A673 (cell line): ENCODE measurements at regions of chr10 and their contacts with region 1.

Region 1: DNA sequence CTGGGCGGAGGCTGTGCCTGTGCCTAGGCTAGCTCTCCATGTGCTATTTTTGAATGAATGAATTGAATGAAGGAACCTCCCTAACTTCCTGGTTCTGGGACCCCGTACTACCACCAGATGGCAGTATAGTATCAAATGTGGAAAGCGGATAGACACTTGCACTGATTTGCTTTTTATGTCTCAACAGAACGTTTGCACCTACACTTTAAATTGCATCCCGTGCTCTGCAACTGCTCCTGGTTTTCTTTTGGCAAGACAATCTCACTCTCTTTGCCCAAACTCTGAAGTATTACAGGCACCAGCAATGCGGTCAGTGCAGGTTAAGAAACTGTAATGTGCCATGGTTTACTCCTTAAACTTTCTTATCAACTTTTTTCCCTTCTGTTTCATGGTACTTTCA is 6.5 kb downstream of the FZD8 start:
- DNase-seq: peak; percentile 89
- H3K4me3 ChIP-seq: peak overlapping the region; percentile 11
- H3K27ac ChIP-seq: no peak overlapping the region
- H3K4me1 ChIP-seq: peaks cover 43% of the 10 kb centered on the region
- H3K27me3 ChIP-seq: no peaks in the 10 kb centered on the region
- CTCF ChIP-seq: peak; percentile 93

Region 2: DNA sequence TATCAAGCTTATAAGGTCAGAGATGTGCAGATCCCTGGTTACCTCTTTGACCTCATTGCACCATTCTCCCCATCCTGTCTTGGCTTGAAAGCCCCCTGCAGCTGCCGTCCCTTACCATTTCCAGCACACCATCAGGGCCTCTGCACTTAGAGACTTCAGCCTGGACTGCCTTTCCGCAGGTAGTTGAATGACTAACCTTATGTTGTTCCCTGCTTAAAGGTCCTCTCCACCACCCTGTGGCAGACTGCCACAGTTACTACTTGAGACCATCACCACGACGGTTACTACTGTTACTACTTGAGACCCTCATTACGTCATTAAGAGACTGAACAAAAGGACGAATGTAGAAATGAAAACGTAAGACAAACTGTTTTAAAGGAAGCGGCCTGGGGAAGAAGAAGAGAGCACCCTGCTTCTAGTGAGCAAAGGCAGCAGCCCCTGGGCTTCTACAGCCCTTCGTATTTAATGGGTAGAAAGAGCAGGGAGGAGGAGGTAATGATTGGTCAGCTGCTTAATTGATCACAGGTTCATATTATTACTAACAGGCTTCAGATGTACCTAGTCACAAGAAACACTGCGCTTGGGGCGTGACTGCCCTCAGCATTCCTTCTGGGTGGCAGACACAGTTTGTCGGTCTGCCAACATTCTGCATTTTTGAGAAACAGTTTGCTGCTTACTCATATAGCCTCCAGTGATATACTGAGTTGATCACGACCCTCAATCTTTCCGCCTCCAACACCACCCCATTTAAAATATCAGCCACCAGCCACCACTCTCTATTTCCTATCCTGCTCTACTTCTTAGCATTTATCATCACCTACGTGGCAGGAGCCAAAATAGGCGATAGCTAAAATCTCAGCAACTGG is 746.3 kb before region 1 on chr10:
- CTCF ChIA-PET with region 1: no interaction called
- POLR2A ChIA-PET with region 1: no interaction called
- intact Hi-C with region 1: no loop called
- DNase-seq: no peak
- H3K4me3 ChIP-seq: no peak overlapping the region
- H3K27ac ChIP-seq: no peak overlapping the region
- H3K4me1 ChIP-seq: no peaks in the 10 kb centered on the region
- H3K27me3 ChIP-seq: no peaks in the 10 kb centered on the region
- CTCF ChIP-seq: no peak

Region 3: GRCh38 chr10:35236739-35237138 is 398.8 kb before region 1 on chr10:
- CTCF ChIA-PET with region 1: interaction called, 12 read pairs
- POLR2A ChIA-PET with region 1: no interaction called
- intact Hi-C with region 1: no loop called
- DNase-seq: peak; percentile 66
- H3K4me3 ChIP-seq: no peak overlapping the region
- H3K27ac ChIP-seq: peak overlapping the region; percentile 40
- H3K4me1 ChIP-seq: peaks cover 16% of the 10 kb centered on the region
- H3K27me3 ChIP-seq: no peaks in the 10 kb centered on the region
- CTCF ChIP-seq: peak; percentile 65

Region 4: GRCh38 chr10:36324831-36325387 is 689.3 kb after region 1 on chr10:
- CTCF ChIA-PET with region 1: no interaction called
- POLR2A ChIA-PET with region 1: no interaction called
- intact Hi-C with region 1: no loop called
- DNase-seq: peak; percentile 11
- H3K4me3 ChIP-seq: no peak overlapping the region
- H3K27ac ChIP-seq: no peak overlapping the region
- H3K4me1 ChIP-seq: no peaks in the 10 kb centered on the region
- H3K27me3 ChIP-seq: no peaks in the 10 kb centered on the region
- CTCF ChIP-seq: no peak

Region 5: DNA sequence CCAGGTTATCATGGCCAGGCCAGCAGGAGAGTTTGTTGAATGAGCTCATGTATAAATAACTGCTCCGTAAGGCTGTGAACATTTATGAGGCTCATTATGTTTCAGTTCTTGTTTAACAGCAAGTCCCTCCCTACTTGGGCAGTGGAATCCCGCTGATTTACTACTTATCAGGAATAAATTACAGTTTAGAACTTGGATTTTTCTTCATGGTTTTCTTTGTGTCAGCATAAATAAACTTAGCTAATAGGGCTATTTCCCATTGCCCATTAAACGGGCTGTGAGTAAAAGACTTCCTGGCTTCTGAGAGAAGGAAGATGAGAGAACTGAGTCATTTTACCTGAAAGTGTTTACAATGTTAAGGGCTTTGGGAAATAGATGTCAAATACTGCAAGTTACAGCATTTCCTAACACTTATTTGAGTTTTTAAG is 788.3 kb after region 1 on chr10:
- CTCF ChIA-PET with region 1: no interaction called
- POLR2A ChIA-PET with region 1: no interaction called
- intact Hi-C with region 1: loop called (anchors 10 kb)
- DNase-seq: peak; percentile 97
- H3K4me3 ChIP-seq: no peak overlapping the region
- H3K27ac ChIP-seq: no peak overlapping the region
- H3K4me1 ChIP-seq: peaks cover 26% of the 10 kb centered on the region
- H3K27me3 ChIP-seq: no peaks in the 10 kb centered on the region
- CTCF ChIP-seq: no peak

Region 6: DNA sequence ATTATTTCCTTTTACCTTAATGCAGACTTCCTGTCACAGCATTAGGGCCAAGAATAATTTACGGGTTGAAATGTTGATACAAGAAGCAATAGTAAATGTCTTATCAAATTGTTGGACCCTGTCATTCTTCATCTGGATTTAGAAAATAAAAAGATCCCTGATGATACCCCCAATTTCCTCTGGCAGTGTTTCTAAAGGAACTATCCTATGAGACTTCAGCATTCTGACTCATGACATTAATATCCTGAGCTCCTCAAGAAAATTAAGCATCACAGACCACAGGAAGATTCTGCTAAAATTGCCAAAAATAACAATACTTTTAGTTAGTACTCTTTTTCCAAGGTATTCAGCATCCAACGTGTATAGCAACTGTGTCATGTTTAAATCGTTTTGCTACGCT is 999.3 kb after region 1 on chr10:
- CTCF ChIA-PET with region 1: no interaction called
- POLR2A ChIA-PET with region 1: no interaction called
- intact Hi-C with region 1: loop called (anchors 5 kb)
- DNase-seq: peak; percentile 95
- H3K4me3 ChIP-seq: peak overlapping the region; percentile 8
- H3K27ac ChIP-seq: peak overlapping the region; percentile 97
- H3K4me1 ChIP-seq: peaks cover 55% of the 10 kb centered on the region
- H3K27me3 ChIP-seq: no peaks in the 10 kb centered on the region
- CTCF ChIP-seq: no peak

Region 7: GRCh38 chr10:36880898-36881297 is 1245.3 kb after region 1 on chr10:
- CTCF ChIA-PET with region 1: interaction called, 3 read pairs
- POLR2A ChIA-PET with region 1: no interaction called
- intact Hi-C with region 1: loop called (anchors 2 kb)
- DNase-seq: peak; percentile 54
- H3K4me3 ChIP-seq: no peak overlapping the region
- H3K27ac ChIP-seq: no peak overlapping the region
- H3K4me1 ChIP-seq: peaks cover 7% of the 10 kb centered on the region
- H3K27me3 ChIP-seq: no peaks in the 10 kb centered on the region
- CTCF ChIP-seq: peak; percentile 63; the same call in 1 of the 2 replicates